CD4-positive, alpha-beta T cell (primary cell): ENCODE measurements at regions of chr20 and their contacts with region 1.

Region 1: GRCh38 chr20:1118336-1119127 is at the start of gene PSMF1:
- DNase-seq: peak; percentile 91 to 98 (median 96)
- ATAC-seq: peak; percentile 89
- H3K4me3 ChIP-seq: peak within 1 kb of the TSS; percentile 81
- H3K4me3 Mint-ChIP-seq: peak within 1 kb of the TSS; percentile 96
- H3K27ac ChIP-seq: peak within 1 kb of the TSS; percentile 72 to 74
- H3K27ac Mint-ChIP-seq: peak within 1 kb of the TSS; percentile 96
- H3K4me1 ChIP-seq: peaks cover 55% of the 10 kb centered on the region
- H3K4me1 Mint-ChIP-seq: peaks cover 67% of the 10 kb centered on the region
- H3K27me3 ChIP-seq: no peaks in the 10 kb centered on the region
- H3K27me3 Mint-ChIP-seq: no peaks in the 10 kb centered on the region
- CTCF ChIP-seq: no peak
- total RNA-seq, gene PSMF1: 79.9 to 84.2 TPM

Region 2: GRCh38 chr20:401682-402495 is 716.6 kb before region 1 on chr20:
- CTCF ChIA-PET with region 1: no interaction called
- POLR2A ChIA-PET with region 1: no interaction called
- intact Hi-C with region 1: no loop called
- DNase-seq: no peak
- ATAC-seq: no peak
- H3K4me3 ChIP-seq: no peak overlapping the region
- H3K4me3 Mint-ChIP-seq: no peak overlapping the region
- H3K27ac ChIP-seq: no peak overlapping the region
- H3K27ac Mint-ChIP-seq: no peak overlapping the region
- H3K4me1 ChIP-seq: peaks cover 15% of the 10 kb centered on the region
- H3K4me1 Mint-ChIP-seq: peaks cover 21% of the 10 kb centered on the region
- H3K27me3 ChIP-seq: no peaks in the 10 kb centered on the region
- H3K27me3 Mint-ChIP-seq: no peaks in the 10 kb centered on the region
- CTCF ChIP-seq: no peak

Region 3: DNA sequence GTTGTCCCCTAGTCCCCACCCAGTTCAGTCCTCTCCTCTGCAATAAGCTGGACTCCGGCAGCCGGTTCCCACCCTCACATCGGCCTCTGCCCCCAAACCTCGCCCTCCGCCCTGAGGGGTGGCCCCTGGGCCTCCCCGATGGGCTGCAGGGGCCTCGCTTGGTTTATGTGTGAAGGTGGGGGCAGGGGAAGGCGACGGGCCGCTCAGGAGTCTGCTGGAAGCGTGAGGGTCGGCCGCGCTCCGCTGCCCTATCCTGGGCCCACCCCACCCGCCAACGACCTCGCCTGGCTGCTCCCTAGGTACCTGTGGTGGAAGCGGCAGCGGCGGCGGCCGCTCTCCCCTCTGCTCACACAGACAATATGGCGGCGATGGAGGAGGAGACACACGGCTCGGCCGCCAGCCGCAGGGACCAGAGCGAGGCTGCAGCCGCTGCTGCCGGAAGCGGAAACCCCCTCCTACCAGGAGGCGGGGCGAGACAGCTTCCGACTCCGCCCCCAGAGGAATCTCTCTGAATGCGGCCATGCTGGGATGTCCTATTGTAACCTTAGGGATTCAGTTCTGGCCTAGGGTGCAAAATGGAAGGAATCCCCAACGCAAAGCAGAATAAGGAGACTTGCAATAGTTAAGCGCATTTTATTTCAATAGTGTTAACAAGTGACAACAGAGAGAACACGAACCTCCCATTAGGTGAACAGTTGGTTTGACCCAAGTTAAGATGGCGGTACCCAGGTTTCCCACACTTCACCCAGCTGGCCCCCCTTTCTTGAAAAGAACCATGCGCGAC is 575.0 kb before region 1 on chr20 and contains the start of gene CSNK2A1:
- CTCF ChIA-PET with region 1: no interaction called
- POLR2A ChIA-PET with region 1: no interaction called
- intact Hi-C with region 1: loop called in 1 of 2 experiments (anchors 5 kb)
- DNase-seq: peak; percentile 91 to 98 (median 96)
- ATAC-seq: peak; percentile 91
- H3K4me3 ChIP-seq: peak within 1 kb of the TSS; percentile 88
- H3K4me3 Mint-ChIP-seq: peak within 1 kb of the TSS; percentile 100
- H3K27ac ChIP-seq: peak within 1 kb of the TSS; percentile 83 to 98
- H3K27ac Mint-ChIP-seq: peak within 1 kb of the TSS; percentile 99
- H3K4me1 ChIP-seq: peaks cover 32% of the 10 kb centered on the region
- H3K4me1 Mint-ChIP-seq: peaks cover 54% of the 10 kb centered on the region
- H3K27me3 ChIP-seq: no peaks in the 10 kb centered on the region
- H3K27me3 Mint-ChIP-seq: peaks cover 12% of the 10 kb centered on the region
- CTCF ChIP-seq: no peak
- total RNA-seq, gene CSNK2A1: 55.5 to 56.9 TPM

Region 4: GRCh38 chr20:1212607-1213396 is 94.3 kb after region 1 on chr20:
- CTCF ChIA-PET with region 1: no interaction called
- POLR2A ChIA-PET with region 1: no interaction called
- intact Hi-C with region 1: loop called (anchors 1 to 2 kb)
- DNase-seq: peak; percentile 54 to 84 (median 61)
- ATAC-seq: peak; percentile 87
- H3K4me3 ChIP-seq: no peak overlapping the region
- H3K4me3 Mint-ChIP-seq: no peak overlapping the region
- H3K27ac ChIP-seq: no peak overlapping the region
- H3K27ac Mint-ChIP-seq: no peak overlapping the region
- H3K4me1 ChIP-seq: peaks cover 30% of the 10 kb centered on the region
- H3K4me1 Mint-ChIP-seq: peaks cover 42% of the 10 kb centered on the region
- H3K27me3 ChIP-seq: no peaks in the 10 kb centered on the region
- H3K27me3 Mint-ChIP-seq: peaks cover 10% of the 10 kb centered on the region
- CTCF ChIP-seq: peak; percentile 88

Region 5: DNA sequence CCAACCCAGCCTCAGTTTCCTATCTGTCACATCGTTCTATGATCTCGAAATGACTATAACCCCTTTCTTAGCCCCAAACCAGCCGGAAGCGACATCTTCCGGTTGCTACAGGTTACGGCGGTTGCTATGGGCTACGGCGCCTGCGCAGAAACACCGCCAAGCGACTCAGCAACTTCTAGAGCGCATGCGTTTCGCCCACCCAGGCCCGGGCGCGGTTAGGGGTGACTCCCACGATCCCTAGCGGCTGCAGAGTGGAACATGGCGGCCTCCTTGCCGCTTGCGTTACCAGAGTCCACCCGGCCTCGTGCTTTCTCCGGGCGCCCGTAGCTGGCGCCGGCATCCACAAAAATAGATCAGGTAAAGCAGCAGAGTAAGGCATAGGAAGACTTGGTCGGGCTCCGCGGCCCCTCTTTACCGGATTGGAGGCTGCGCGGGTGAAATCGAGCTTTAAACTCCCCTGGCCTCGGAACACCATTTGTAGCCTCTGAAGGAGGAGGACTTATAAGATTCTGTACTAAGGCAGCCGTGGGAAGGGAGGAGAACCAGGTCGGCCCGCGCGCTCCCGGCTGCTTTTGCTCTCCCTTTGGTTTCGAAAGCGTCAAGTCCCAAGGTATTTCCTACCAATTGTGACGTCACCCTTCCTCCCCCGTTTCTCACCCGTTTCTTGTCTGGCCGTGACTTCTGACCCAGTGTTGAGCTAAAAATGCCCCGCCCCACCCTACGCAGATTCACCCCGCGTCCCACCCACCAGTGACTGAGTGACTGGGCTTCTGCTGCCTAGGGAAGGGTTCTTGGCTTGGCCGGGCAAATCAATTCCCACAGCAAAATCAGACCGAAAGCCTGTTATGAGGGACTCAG is 206.9 kb after region 1 on chr20:
- CTCF ChIA-PET with region 1: no interaction called
- POLR2A ChIA-PET with region 1: no interaction called
- intact Hi-C with region 1: loop called (anchors 2 to 5 kb)
- DNase-seq: peak; percentile 98 to 100 (median 99)
- ATAC-seq: peak; percentile 84
- H3K4me3 ChIP-seq: peak overlapping the region; percentile 95
- H3K4me3 Mint-ChIP-seq: no peak overlapping the region
- H3K27ac ChIP-seq: peak overlapping the region; percentile 95 to 98
- H3K27ac Mint-ChIP-seq: no peak overlapping the region
- H3K4me1 ChIP-seq: peaks cover 55% of the 10 kb centered on the region
- H3K4me1 Mint-ChIP-seq: peaks cover 13% of the 10 kb centered on the region
- H3K27me3 ChIP-seq: no peaks in the 10 kb centered on the region
- H3K27me3 Mint-ChIP-seq: no peaks in the 10 kb centered on the region
- CTCF ChIP-seq: peak; percentile 13

Region 6: DNA sequence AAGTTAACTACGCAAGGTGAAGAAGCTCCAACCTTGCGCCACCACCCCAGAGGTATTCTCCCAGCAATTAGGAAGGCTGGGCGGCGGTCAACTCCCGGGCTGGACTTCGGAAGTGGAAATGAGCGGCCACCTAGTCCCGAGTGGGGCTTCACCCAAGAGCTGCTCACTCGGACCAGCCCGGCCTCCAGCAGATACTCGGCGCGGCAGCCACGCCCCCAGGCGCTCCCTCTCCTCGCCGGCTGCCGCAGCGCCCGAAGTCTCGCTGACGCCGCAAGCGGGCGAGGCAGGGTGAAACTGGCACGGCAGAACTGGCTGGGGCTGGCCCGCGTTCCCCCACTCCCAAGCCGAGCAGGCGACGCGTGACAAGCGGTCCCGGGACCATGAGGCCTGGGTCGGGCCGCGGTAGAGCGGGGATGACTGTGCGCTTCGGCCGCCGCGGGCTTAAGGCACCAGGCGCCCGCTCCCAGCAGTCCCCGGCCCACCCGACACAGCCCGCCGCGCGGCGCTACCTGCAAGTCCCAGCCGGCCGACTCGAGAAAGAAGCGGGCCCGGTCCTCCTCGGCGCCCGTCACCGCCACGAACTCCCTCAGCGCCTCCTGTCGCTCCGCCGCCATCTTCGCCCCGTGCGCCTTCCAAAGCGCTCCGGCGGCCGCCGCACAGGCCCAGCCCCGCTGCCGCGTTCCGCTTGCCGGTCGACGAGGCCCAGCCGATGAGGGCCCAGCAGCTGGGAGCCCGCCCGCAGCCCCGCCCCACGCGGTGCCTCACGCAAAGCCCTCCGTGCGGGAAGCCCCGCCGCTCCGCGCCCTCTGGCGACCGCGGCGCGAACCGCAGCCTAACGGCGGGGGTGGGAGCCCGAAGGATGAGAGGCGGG is 347.9 kb after region 1 on chr20 and contains the start of gene NSFL1C:
- CTCF ChIA-PET with region 1: no interaction called
- POLR2A ChIA-PET with region 1: interaction called, 5 read pairs
- intact Hi-C with region 1: loop called (anchors 1 to 2 kb)
- DNase-seq: peak; percentile 94 to 99 (median 98)
- ATAC-seq: peak; percentile 96
- H3K4me3 ChIP-seq: peak within 1 kb of the TSS; percentile 73
- H3K4me3 Mint-ChIP-seq: peak within 1 kb of the TSS; percentile 88
- H3K27ac ChIP-seq: peak within 1 kb of the TSS; percentile 41 to 84
- H3K27ac Mint-ChIP-seq: peak within 1 kb of the TSS; percentile 68
- H3K4me1 ChIP-seq: peaks cover 34% of the 10 kb centered on the region
- H3K4me1 Mint-ChIP-seq: peaks cover 49% of the 10 kb centered on the region
- H3K27me3 ChIP-seq: peaks cover 0 to 2% of the 10 kb centered on the region in 2 experiments
- H3K27me3 Mint-ChIP-seq: peaks cover 10% of the 10 kb centered on the region
- CTCF ChIP-seq: peak; percentile 100
- total RNA-seq, gene NSFL1C: 53.2 to 53.4 TPM